Right ventricle myocardium inferior (tissue), 1 donor: ENCODE measurements at regions of chr3 and their contacts with region 1.

Region 1: GRCh38 chr3:99499235-99500158 is 138.9 kb upstream of the COL8A1 start:
- DNase-seq: no peak
- ATAC-seq: peak; percentile 62

Region 2: GRCh38 chr3:98692787-98693473 is 806.6 kb before region 1 on chr3:
- intact Hi-C with region 1: no loop called
- DNase-seq: no peak
- ATAC-seq: peak; percentile 85

Region 3: DNA sequence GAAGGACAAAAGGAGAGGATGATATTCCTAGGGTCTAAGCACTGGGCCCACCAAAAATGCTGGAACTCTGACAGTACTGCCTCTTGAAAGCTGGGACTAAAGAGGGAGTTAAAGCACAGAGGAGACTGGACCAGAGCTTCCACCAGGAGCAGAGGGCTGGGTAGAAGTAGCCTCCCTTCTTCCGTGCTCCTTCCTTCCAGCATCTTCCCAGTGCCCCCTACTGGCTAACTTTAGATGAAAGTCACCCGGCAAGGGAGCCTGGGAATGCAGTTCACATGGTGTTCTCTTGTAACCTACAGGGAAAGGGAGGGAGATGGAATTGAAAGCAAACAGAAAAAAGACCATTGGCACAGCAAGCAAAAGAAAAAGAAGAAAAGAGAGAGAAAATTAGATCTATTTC is 32.7 kb after region 1 on chr3:
- intact Hi-C with region 1: loop called (anchors 2 kb)
- DNase-seq: peak; percentile 16
- ATAC-seq: peak; percentile 69

Region 4: DNA sequence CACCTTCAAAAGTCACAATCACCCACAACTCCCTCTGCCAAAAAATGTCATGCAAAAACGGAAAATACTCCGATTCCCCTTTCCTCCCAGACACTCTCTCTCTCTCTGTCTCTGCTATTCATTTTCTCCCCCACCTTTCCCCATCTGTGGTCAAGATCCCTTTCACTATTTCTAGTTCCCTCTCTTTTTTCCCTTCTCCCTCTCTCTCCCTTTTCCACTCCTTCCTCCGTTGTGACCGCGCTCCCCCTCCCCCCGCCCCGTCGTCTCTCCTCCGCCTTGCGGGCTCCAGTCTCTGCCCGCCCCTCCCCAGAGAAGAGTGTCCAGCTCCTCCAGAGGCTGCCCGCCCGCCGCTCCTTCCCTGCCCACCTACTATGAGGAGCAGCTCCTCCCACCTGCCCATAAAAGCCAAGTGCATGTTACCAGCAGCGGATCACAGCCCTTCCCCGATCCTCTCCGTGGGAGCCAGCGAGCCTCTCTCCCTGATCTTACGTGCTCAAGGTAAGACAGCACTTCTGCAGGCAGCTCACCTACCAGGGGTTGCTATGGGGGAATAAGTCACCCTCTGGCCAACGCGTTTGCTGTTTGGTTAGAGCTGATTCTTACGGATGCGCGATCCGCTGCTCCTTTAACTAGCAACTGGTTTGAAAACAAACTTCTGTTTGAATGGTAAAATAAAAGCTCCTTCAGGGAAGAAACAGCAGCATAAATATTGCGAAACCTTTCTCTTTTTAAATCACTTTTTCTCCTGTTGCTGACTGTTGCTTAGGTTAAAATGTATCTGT is 138.9 kb after region 1 on chr3 and contains the start of gene COL8A1:
- intact Hi-C with region 1: loop called (anchors 10 kb)
- DNase-seq: peak; percentile 75
- ATAC-seq: peak; percentile 89
- total RNA-seq, gene COL8A1: 14.1 TPM

Region 5: GRCh38 chr3:99686955-99687612 is 187.6 kb after region 1 on chr3:
- intact Hi-C with region 1: loop called (anchors 2 kb)
- DNase-seq: peak; percentile 63
- ATAC-seq: no peak

Region 6: DNA sequence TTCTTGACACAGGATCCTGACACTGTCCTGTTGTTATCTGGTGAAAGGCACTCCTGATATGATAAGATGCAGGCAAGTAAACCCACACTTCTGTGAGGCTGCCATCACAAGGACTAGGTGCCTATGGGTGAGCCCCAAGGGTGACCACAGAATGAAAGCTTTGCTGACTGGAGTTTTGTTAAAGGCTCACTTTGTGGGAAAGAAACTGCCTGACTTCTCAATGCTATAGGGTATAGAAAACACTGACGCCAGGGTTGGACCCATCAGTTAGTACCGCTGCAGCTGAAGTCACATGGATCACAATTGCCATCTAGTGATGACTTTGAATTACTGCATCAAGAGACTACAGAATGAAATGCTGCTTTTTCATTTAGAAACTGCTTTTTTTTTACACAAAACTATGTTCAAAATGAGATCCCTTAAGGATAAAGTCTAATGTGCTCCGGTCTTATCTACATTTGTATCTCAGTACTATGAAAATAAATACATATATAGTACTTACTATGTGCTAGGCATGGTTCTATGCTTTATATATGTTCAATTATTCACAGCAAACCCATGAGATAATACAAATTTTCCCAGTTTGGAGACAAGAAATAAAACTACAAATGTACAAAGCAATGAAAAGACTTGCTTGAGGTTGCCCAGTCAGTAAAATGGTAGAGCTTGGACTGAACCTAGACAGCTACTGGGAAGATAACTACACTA is 253.9 kb after region 1 on chr3:
- intact Hi-C with region 1: loop called (anchors 2 kb)
- DNase-seq: no peak
- ATAC-seq: peak; percentile 77

Region 7: GRCh38 chr3:99789011-99789721 is 289.7 kb after region 1 on chr3:
- intact Hi-C with region 1: loop called (anchors 2 kb)
- DNase-seq: no peak
- ATAC-seq: peak; percentile 93

Region 8: GRCh38 chr3:99901200-99901926 is 401.9 kb after region 1 on chr3:
- intact Hi-C with region 1: no loop called
- DNase-seq: no peak
- ATAC-seq: peak; percentile 31

Region 9: DNA sequence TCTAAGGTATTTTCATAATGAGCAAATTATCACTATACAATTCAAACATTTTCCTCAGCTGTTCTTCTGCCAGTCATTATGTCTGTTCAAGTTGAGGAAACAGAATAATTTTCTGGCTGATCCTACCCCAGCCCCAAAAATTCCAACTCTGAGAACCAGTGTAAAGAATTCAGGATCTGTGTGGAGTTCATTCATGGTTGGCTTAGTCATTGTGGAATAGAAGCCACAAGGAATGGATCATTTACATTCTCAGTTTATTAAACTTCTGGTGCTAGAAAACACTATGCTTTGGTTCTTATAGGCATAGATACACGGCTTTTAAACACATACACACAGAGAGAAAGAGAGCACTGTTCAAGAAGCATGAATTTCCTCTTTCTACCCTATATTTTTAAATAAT is 452.8 kb after region 1 on chr3:
- intact Hi-C with region 1: no loop called
- DNase-seq: no peak
- ATAC-seq: no peak